Motor neuron (in vitro differentiated cells): ENCODE measurements at regions of chrX and their contacts with region 1.

Region 1: DNA sequence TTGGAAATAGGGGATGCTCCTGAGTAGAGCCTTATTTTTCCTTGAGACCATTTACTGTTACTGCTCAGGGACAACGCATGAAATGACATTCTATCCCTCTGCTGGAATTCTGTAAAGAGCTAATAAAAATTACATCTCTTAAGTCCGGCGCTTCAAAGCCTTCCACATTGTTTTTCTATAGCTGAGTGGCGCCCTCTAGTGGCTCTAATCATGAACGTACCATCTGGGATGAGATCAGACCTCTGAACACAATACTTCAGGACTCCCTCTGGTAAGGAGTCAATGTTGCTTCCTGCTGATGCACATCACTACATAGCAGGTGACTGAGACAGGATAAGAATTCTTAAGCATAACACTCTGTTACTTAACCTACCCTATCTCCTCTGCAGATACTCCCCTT is 6.0 kb downstream of the HMGN5 start:
- ATAC-seq: peak in 5 of 8 experiments; percentile 16 to 97 (median 93)
- H3K4me3 ChIP-seq: no peak overlapping the region
- H3K27ac ChIP-seq: no peak overlapping the region
- H3K4me1 ChIP-seq: no peaks in the 10 kb centered on the region

Region 2: GRCh38 chrX:81355436-81355835 is 159.7 kb after region 1 on chrX:
- in situ Hi-C with region 1: no loop called
- ATAC-seq: no peak
- H3K4me3 ChIP-seq: no peak overlapping the region
- H3K27ac ChIP-seq: no peak overlapping the region
- H3K4me1 ChIP-seq: no peaks in the 10 kb centered on the region

Region 3: DNA sequence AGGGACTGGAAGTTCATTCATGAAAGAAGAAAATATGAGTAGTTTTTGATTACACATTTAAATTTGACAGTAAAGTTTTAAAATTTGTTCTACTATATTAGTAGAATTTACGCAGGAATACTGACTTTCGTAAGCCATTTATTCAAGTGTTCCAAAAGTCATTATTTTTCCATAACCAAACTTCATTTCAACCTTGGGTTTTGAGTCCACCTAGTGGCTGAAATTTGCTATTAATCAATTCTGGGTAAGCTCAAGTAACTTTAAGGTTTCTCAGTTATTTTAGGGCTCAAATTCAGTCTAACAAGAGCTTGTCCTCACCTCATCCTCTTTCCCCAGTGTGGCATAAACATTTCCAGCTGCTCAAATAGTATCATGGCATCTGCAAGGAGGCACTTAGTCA is 181.6 kb after region 1 on chrX:
- in situ Hi-C with region 1: loop called in 1 of 9 experiments (anchors 25 kb)
- ATAC-seq: no peak
- H3K4me3 ChIP-seq: no peak overlapping the region
- H3K27ac ChIP-seq: no peak overlapping the region
- H3K4me1 ChIP-seq: no peaks in the 10 kb centered on the region